Activated CD4-positive, alpha-beta T cell treated with anti-CD3 and anti-CD28 coated beads, Interleukin-2, amount 10 ng/mL, durations not matched to agents 7 days and 5 days (primary cell): ENCODE measurements at regions of chr11 and their contacts with region 1.

Region 1: DNA sequence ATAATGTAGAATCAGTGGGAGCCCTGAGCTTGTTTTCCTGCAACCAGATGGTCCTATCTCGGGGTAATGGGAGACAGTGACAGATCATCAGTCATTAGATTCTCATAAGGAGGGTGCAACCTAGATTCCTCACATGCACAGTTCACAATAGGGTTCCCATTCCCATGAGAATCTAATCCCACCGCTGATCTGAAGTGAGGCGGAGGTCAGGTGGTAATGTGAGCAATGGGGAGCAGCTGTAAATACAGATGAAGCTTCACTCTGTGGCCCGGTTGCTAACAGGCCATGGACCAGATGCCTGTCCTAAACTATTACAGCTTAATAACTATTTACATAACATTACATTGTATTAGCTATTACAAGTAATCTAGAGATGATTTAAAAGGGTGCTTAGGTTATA is 17.0 kb downstream of the DIXDC1 start:
- DNase-seq: no peak
- H3K4me3 Mint-ChIP-seq: no peak overlapping the region
- H3K27ac Mint-ChIP-seq: no peak overlapping the region
- H3K4me1 Mint-ChIP-seq: peaks cover 8% of the 10 kb centered on the region
- H3K27me3 Mint-ChIP-seq: no peaks in the 10 kb centered on the region

Region 2: DNA sequence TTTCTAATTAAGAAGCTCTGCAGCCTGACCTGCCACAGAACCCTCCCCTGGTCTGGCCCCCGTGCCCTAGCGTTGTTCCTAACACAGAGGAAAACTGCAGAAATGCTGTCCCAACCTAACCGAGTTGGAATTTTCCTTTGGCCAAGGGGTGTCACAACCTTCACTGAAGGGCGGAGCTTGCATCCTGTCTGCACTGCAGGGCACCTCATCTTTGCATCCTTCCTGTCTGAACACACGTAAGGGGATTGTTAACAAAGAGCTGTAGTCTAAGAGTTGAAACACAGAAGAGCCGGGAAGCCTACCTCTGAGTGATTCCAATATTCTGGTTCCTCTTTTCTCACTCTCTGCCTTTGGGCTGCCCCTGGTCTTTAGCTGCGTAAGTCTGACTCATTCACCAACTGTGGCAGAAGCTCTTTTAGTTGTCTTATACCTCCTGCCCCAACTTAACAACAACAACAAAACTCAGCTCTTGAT is 15.4 kb before region 1 on chr11:
- CTCF ChIA-PET with region 1: interaction called, 10 read pairs
- POLR2A ChIA-PET with region 1: no interaction called
- DNase-seq: peak; percentile 29
- H3K4me3 Mint-ChIP-seq: peak overlapping the region; percentile 81
- H3K27ac Mint-ChIP-seq: peak overlapping the region; percentile 82
- H3K4me1 Mint-ChIP-seq: peaks cover 41% of the 10 kb centered on the region
- H3K27me3 Mint-ChIP-seq: no peaks in the 10 kb centered on the region